ENCODE measurements at regions of chr1 and their contacts with region 1.

Region 1: DNA sequence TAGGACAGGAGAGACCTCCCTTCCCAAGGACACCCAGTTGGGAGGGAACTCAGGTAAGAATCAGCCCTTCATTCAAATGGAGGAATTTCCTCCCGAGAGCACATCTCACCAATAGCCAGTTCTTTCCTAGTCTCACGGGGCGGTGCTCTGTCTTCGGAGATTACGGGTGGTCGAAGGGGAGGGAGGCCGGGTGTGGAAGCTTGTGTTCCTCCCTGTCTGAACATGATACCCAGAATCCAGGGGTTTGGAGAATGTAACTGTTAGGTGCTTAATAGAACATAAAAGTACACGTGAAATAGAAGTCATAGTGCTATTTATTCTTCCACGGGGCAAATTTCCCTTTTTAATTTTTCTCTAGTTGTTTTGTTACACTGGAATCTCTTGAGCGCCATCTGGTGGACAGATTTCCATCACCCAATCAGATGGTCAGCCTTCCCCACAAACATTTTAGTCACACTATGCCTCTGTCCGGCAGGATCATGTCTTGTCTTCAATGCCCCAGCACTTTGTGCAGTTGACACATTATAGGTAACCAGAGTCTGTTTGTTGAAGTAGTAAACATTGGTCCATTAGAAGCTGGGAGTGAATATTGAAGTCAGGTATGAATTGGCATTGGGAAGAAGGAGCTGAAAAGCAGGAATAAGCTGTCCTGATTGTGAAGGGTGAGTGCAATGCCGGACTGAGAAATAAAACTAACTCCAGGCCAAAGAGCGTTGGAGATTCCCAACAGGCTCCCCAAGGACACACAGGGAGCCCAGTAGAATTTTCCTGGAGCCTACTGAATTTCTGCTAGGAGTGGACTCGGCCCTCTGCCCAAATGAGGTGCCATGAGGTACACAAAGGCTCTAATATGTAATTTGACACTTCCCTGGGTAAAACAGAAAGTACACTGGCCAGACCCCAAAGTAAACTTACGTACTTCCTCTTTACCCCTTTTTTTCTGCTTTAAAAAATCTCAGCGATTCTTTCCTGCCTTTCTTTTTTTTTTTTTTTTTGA is 27.6 kb upstream of the ZNF697 start:
- DNase-seq: peak in 1 of 2 experiments; percentile 87
- H3K4me3 ChIP-seq: peak overlapping the region; percentile 27 to 55 (median 34); a peak in 5 of 8 replicates
- H3K27ac ChIP-seq: no peak overlapping the region
- H3K4me1 ChIP-seq: peaks cover 5 to 17% (median 12%) of the 10 kb centered on the region in 4 experiments; a peak in 6 of 7 replicates
- H3K27me3 ChIP-seq: no peaks in the 10 kb centered on the region
- CTCF ChIP-seq: peak; percentile 36 to 71 (median 48)
- EP300 ChIP-seq: no peak
- POLR2A ChIP-seq: peak in 1 of 2 experiments; percentile 29; a peak in 1 of 3 replicates
- RAD21 ChIP-seq: peak; percentile 44 to 54

Region 2: DNA sequence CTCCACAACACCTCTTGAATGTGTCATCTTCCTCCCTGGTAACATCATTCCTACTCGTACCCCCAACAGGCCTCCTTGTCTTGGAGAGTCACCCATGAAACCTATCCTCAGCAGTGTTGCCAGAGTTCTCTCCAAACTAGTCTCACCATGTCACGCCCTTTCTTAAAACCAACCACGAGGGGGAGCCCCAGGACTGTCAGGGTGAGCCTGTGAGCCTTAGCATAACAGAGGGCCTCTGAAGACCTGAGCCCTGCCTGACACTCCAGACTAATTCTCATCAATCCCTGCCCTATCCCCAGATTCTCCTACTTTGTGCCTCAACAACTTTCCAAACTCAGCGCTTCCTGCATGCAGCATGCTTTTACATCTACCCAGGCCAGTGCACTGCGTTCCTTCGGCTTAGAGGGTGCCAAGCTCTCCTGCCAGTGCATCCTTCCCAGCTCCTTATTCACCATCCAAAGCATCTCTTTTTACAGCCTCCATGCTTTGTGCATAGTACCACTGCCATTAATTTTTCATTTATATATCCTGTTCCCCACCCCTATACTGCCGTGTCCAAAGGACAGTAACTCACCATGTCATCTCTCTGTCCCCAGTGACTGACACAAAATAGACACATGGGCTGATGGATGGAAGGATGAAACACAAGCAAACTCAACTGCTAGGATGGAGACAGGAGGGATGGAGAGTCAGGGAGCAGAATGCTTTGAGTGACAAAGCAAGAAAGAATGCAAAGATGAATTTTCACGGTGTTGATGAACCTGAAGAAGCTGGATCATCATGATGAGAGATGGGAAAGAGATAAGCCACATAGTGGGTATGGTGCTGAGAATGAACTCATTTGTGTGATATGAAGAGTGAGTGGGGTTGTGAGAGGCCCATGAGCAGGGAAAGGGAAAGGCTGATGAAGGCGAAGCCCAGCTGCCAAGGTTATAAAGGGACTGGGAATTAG is 61.6 kb before region 1 on chr1:
- CTCF ChIA-PET with region 1: interaction called, 97 read pairs
- POLR2A ChIA-PET with region 1: interaction called, 10 read pairs
- DNase-seq: peak; percentile 69 to 96
- H3K4me3 ChIP-seq: no peak overlapping the region
- H3K27ac ChIP-seq: no peak overlapping the region
- H3K4me1 ChIP-seq: peaks cover 0 to 3% (median under 1%) of the 10 kb centered on the region in 4 experiments; a peak in 5 of 7 replicates
- H3K27me3 ChIP-seq: no peaks in the 10 kb centered on the region
- CTCF ChIP-seq: peak; percentile 62 to 94 (median 80)
- EP300 ChIP-seq: no peak
- POLR2A ChIP-seq: no peak
- RAD21 ChIP-seq: peak; percentile 92 to 97

Region 3: GRCh38 chr1:119662034-119662437 is 13.6 kb before region 1 on chr1:
- CTCF ChIA-PET with region 1: interaction called, 141 read pairs
- POLR2A ChIA-PET with region 1: interaction called, 6 read pairs
- DNase-seq: no peak
- H3K4me3 ChIP-seq: no peak overlapping the region
- H3K27ac ChIP-seq: no peak overlapping the region
- H3K4me1 ChIP-seq: peaks cover 0 to 5% (median 1%) of the 10 kb centered on the region in 4 experiments; a peak in 2 of 7 replicates
- H3K27me3 ChIP-seq: no peaks in the 10 kb centered on the region
- CTCF ChIP-seq: no peak
- EP300 ChIP-seq: no peak
- POLR2A ChIP-seq: no peak
- RAD21 ChIP-seq: no peak

Region 4: GRCh38 chr1:119711804-119712341 is 36.2 kb after region 1 on chr1 and contains the start of gene PHGDH:
- CTCF ChIA-PET with region 1: interaction called, 67 read pairs
- POLR2A ChIA-PET with region 1: interaction called, 167 read pairs
- DNase-seq: peak in 1 of 2 experiments; percentile 83
- H3K4me3 ChIP-seq: peak within 1 kb of the TSS; percentile 85 to 99 (median 99)
- H3K27ac ChIP-seq: peak within 1 kb of the TSS; percentile 89
- H3K4me1 ChIP-seq: peaks cover 14 to 32% (median 20%) of the 10 kb centered on the region in 4 experiments
- H3K27me3 ChIP-seq: no peaks in the 10 kb centered on the region
- CTCF ChIP-seq: no peak
- EP300 ChIP-seq: no peak
- POLR2A ChIP-seq: peak; percentile 88 to 99
- RAD21 ChIP-seq: no peak
- total RNA-seq, gene PHGDH: 674 and 687 TPM in 2 replicates

Region 5: GRCh38 chr1:119808972-119809550 is 133.4 kb after region 1 on chr1:
- CTCF ChIA-PET with region 1: no interaction called
- POLR2A ChIA-PET with region 1: no interaction called
- DNase-seq: peak; percentile 47 to 78
- H3K4me3 ChIP-seq: no peak overlapping the region
- H3K27ac ChIP-seq: no peak overlapping the region
- H3K4me1 ChIP-seq: no peaks in the 10 kb centered on the region
- H3K27me3 ChIP-seq: peaks cover 0 to 1% (median 0%) of the 10 kb centered on the region in 4 experiments; a peak in 3 of 7 replicates
- CTCF ChIP-seq: peak; percentile 79 to 91 (median 87)
- EP300 ChIP-seq: no peak
- POLR2A ChIP-seq: no peak
- RAD21 ChIP-seq: peak; percentile 71 to 78